H1 (cell line): ENCODE measurements at regions of chr19 and their contacts with region 1.

Region 1: DNA sequence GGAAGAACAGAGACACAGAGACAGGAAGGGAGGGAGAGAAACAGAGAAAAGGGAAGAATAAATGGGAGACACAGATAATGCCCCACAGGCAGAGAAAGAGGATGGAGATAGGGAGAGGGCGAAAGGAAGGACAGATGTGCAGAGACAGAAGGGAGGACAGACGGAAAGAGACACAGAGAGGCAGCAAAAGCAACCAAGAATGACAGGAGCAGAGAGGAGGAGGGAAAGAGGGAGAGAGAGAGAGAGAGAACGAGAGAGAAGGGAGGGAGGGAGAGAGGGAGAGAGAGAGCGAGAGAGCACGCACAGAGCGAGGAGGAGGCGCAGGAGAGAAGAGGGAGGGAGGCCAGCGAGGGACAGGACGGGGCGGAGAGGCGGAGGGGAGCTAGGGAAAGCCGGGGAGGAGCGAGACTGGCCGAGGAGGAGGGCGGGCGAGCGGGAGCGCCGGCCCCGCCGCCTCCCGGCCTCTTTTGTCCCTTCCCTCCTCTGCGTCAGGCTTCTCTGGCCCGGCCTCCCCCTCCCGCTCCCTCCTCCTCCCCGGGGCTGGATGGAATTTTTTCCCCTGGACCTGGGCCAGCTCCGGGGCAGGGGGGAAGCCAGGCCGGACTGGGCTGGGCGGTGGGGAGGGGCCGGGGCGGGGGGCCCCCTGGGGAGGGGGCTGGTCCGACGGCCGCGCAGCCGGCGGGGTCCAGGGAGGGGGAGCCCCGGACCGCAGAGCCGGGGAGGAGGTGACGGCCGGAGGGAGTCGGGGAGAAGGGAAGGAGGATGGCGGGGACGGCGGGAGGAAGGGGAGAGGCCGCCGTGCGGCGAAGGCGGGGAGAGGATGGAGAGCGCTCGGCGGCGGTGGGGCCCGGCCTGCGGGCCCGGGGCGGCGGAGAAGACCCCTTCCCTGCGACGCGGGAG is 4.2 kb upstream of the SPACA6 start:
- DNase-seq: peak in 1 of 2 experiments; percentile 80
- H3K4me3 ChIP-seq: peak overlapping the region; percentile 64 to 75 (median 66)
- H3K27ac ChIP-seq: no peak overlapping the region
- H3K4me1 ChIP-seq: peaks cover 0 to 18% (median 11%) of the 10 kb centered on the region in 4 experiments; a peak in 5 of 7 replicates
- H3K27me3 ChIP-seq: no peaks in the 10 kb centered on the region
- CTCF ChIP-seq: no peak
- EP300 ChIP-seq: no peak
- POLR2A ChIP-seq: no peak
- RAD21 ChIP-seq: no peak

Region 2: DNA sequence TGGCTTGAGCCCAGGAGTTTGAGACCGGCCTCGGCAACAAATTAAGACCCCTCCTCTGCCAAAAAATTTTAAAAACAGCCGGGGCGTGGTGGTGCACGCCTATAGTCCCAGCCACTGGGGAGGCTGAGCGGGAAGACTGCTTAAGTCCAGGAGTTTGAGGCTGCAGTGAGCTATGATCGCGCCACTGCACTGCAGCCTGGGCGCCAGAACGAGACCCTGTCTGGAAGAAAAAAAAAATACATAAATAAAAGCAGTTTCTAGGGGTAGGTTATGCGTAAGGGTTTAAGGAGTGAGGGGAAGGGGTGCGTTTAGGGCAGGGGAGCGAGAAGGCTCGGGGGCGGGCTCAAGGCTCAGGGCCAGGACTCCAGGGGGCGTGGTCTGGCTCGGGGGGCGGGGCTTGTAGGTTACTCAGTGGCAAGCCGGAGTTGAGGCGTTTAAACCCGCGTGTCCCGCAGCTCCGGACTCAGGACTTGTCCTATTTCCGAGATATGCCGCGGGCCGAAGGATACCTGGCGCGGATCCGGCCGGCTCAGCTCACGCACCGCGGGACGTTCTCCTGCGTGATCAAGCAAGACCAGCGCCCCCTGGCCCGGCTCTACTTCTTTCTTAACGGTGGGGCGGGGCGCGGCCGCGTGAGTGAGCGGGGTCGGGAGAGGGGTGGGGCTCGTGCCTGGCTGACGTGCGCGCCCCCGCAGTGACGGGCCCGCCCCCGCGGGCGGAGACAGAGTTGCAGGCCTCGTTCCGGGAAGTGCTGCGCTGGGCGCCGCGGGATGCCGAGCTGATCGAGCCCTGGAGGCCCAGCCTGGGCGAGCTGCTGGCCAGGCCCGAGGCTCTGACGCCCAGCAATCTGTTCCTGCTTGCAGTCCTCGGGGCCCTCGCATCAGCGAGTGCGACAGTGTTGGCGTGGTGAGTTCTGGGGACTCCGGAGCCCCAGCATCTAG is 14.9 kb after region 1 on chr19:
- CTCF ChIA-PET with region 1: interaction called, 9 read pairs
- POLR2A ChIA-PET with region 1: interaction called, 28 read pairs
- DNase-seq: peak; percentile 75 to 97
- H3K4me3 ChIP-seq: peak overlapping the region; percentile 69 to 75 (median 70)
- H3K27ac ChIP-seq: peak overlapping the region; percentile 46; the same call in 1 of the 2 replicates
- H3K4me1 ChIP-seq: peaks cover 0 to 11% (median 5%) of the 10 kb centered on the region in 4 experiments; a peak in 6 of 7 replicates
- H3K27me3 ChIP-seq: no peaks in the 10 kb centered on the region
- CTCF ChIP-seq: peak; percentile 12 to 37 (median 34); a peak in 3 of 4 replicates
- EP300 ChIP-seq: no peak
- POLR2A ChIP-seq: peak in 1 of 2 experiments; percentile 84; a peak in 2 of 3 replicates
- RAD21 ChIP-seq: no peak

Region 3: DNA sequence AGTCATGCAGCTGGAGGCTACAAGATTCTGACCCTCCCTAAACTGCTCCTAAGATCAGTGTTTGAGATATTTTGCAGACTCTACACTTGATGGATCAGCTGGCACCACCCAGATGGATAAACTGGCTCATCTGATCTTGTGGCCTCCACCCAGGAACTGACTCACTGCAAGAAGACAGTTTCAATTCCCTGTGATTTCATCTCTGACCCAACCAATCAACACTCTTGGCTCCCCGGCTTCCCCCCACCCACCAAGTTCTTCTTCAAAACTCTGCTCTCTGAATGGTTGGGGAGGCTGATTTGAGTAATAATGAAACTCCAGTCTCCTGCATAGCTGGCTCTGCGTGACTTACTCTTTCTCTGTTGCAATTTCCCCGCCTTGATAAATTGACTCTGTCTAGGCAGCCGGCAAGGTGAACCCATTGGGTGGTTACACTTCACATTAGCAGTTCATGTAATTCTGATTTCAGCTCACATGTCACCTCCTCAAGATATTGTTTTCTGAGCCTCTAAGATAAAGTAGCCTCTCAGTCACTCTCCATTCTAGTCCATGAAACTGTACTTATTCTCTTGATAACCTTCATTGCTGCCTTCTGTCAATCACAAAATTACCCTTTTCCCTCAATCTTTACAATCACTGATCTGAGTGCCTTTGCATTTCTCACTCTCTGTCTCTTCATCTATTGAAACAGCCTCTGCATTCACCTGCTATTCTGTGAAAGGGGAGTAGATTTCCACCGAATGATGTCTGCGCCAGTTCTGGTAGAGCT is 96.2 kb after region 1 on chr19:
- CTCF ChIA-PET with region 1: no interaction called
- POLR2A ChIA-PET with region 1: no interaction called
- DNase-seq: no peak
- H3K4me3 ChIP-seq: no peak overlapping the region
- H3K27ac ChIP-seq: no peak overlapping the region
- H3K4me1 ChIP-seq: no peaks in the 10 kb centered on the region
- H3K27me3 ChIP-seq: no peaks in the 10 kb centered on the region; a peak in 1 of 7 replicates
- CTCF ChIP-seq: no peak
- EP300 ChIP-seq: no peak
- POLR2A ChIP-seq: no peak
- RAD21 ChIP-seq: no peak